ENCODE measurements at regions of chr4 and their contacts with region 1.

Region 1: GRCh38 chr4:185183619-185184281 is 20.1 kb downstream of the CFAP97 start:
- DNase-seq: peak in 1 of 2 donors; percentile 93
- H3K4me3 ChIP-seq: no peak overlapping the region
- H3K27ac ChIP-seq: peak overlapping the region in 1 of 2 donors; percentile 28
- H3K4me1 ChIP-seq: peaks cover 0 to 29% of the 10 kb centered on the region in 2 donors
- H3K27me3 ChIP-seq: no peaks in the 10 kb centered on the region
- CTCF ChIP-seq: peak; percentile 57 to 77 (median 76)

Region 2: DNA sequence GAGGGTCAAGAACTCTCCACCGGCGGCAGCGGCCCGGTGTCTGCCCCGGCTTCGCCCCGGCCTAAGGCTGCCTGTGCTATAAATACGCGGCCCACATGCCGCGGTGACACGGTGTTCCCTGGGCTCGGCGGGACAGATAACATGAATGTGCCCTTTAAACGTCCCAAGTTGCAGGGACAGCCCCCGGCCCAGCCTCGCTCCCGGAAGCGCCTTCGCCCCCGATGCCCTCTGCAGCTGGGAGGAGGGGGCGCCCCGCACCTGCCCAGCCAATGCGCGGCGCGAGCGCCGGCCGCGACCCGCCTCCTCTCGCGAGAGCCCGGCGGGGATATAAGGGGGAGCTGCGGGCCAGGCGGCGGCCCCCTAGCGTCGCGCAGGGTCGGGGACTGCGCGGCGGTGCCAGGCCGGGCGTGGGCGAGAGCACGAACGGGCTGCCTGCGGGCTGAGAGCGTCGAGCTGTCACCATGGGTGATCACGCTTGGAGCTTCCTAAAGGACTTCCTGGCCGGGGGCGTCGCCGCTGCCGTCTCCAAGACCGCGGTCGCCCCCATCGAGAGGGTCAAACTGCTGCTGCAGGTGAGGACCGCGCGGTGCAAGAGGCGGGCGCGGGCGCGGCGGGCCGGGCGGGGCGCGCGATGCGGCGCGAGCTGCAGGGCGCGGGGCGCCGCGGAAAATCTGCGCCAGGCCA is 40.7 kb before region 1 on chr4 and contains the start of gene SLC25A4:
- intact Hi-C with region 1: loop called (anchors 1 kb)
- DNase-seq: peak; percentile 50 to 94
- H3K4me3 ChIP-seq: peak within 1 kb of the TSS; percentile 65 to 87
- H3K27ac ChIP-seq: peak within 1 kb of the TSS; percentile 92 to 93
- H3K4me1 ChIP-seq: peaks cover 3 to 15% of the 10 kb centered on the region in 2 donors
- H3K27me3 ChIP-seq: no peaks in the 10 kb centered on the region
- CTCF ChIP-seq: peak; percentile 44 to 69 (median 58)
- total RNA-seq, gene SLC25A4: 19.6 TPM

Region 3: DNA sequence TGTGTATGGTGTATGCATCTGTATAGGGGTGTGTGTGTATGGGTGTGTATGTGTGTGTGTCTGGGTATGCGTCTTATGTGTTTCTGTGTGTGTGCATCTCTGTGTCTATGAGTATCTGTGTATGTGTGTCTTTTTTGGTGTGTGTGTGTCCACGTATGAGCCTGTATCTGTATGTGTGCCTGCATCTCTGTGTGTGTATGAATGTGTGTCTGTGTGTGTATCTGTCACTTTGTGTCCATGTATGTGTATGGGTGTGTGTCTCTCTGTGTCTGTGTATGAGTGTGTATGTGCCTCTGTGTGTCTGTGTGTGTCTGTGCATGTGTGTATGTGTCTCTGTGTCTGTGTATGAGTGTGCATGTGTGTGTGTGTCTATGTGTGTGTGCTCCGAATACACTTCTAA is 945.1 kb after region 1 on chr4:
- intact Hi-C with region 1: no loop called
- DNase-seq: no peak
- H3K4me3 ChIP-seq: no peak overlapping the region
- H3K27ac ChIP-seq: no peak overlapping the region
- H3K4me1 ChIP-seq: no peaks in the 10 kb centered on the region
- H3K27me3 ChIP-seq: no peaks in the 10 kb centered on the region
- CTCF ChIP-seq: no peak

Measured in ascending aorta (tissue), 2 donors.